ENCODE measurements at regions of chr2 and their contacts with region 1.

Region 1: DNA sequence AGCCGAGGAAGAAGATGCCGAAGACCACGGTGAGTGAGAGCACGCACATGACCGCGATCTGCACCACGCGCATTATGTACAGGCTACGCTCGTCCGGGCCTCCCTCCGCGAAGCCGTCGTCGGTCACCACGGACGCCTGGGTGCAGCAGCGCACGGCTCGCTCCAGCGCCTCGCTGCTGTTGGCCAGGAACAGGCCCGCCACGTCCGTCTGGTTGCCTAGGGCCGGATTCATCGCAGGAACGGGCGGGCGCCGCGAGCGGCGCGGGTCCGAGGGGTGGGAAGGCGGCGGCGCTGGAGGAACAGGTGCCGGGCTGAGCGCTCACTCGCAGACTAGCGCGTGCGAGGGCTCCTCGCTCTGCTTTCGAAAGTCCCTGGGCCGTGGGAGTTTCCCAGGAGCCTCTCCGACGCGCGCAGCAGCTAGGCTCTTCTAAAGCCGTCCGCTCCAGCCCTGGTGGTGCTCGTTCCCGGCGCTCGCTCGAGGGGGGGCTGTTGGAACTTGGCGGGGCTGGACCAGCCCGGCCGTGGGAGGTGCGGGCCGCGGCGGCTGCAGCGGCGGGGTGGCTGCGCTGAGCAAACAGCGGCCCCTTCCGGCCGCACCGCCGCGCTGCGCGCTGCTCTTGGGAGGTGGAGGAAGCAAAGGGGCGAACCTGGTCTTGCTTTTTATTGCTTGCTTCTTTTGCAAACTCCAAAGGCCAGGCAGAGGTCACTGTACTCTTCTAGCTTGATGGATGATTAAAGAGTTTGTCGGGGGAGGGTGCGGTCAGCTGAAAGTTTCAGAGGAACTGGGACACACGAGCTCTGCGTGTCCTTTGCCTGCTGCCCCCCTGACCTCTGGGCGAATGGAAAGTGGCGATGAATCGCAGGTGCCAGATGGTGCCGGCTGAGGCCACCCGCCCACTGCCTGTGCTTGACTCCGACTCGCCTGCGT is at the start of gene RPRM:
- DNase-seq: peak; percentile 89
- H3K4me3 Mint-ChIP-seq: peak within 1 kb of the TSS; percentile 56
- H3K27ac Mint-ChIP-seq: peak within 1 kb of the TSS; percentile 19
- H3K4me1 Mint-ChIP-seq: peaks cover 9% of the 10 kb centered on the region
- H3K27me3 Mint-ChIP-seq: peaks cover 52% of the 10 kb centered on the region
- total RNA-seq, gene RPRM: not detected in 2 replicates

Region 2: GRCh38 chr2:152594022-152594766 is 884.4 kb before region 1 on chr2:
- intact Hi-C with region 1: no loop called
- DNase-seq: peak; percentile 67
- H3K4me3 Mint-ChIP-seq: no peak overlapping the region
- H3K27ac Mint-ChIP-seq: peak overlapping the region; percentile 5
- H3K4me1 Mint-ChIP-seq: peaks cover 9% of the 10 kb centered on the region
- H3K27me3 Mint-ChIP-seq: no peaks in the 10 kb centered on the region

Region 3: GRCh38 chr2:152925547-152926327 is 552.9 kb before region 1 on chr2:
- intact Hi-C with region 1: loop called (anchors 5 kb)
- DNase-seq: peak; percentile 82
- H3K4me3 Mint-ChIP-seq: no peak overlapping the region
- H3K27ac Mint-ChIP-seq: no peak overlapping the region
- H3K4me1 Mint-ChIP-seq: no peaks in the 10 kb centered on the region
- H3K27me3 Mint-ChIP-seq: no peaks in the 10 kb centered on the region

Region 4: GRCh38 chr2:153163058-153163457 is 315.5 kb before region 1 on chr2:
- intact Hi-C with region 1: loop called (anchors 2 kb)
- DNase-seq: no peak
- H3K4me3 Mint-ChIP-seq: no peak overlapping the region
- H3K27ac Mint-ChIP-seq: no peak overlapping the region
- H3K4me1 Mint-ChIP-seq: no peaks in the 10 kb centered on the region
- H3K27me3 Mint-ChIP-seq: no peaks in the 10 kb centered on the region

Region 5: DNA sequence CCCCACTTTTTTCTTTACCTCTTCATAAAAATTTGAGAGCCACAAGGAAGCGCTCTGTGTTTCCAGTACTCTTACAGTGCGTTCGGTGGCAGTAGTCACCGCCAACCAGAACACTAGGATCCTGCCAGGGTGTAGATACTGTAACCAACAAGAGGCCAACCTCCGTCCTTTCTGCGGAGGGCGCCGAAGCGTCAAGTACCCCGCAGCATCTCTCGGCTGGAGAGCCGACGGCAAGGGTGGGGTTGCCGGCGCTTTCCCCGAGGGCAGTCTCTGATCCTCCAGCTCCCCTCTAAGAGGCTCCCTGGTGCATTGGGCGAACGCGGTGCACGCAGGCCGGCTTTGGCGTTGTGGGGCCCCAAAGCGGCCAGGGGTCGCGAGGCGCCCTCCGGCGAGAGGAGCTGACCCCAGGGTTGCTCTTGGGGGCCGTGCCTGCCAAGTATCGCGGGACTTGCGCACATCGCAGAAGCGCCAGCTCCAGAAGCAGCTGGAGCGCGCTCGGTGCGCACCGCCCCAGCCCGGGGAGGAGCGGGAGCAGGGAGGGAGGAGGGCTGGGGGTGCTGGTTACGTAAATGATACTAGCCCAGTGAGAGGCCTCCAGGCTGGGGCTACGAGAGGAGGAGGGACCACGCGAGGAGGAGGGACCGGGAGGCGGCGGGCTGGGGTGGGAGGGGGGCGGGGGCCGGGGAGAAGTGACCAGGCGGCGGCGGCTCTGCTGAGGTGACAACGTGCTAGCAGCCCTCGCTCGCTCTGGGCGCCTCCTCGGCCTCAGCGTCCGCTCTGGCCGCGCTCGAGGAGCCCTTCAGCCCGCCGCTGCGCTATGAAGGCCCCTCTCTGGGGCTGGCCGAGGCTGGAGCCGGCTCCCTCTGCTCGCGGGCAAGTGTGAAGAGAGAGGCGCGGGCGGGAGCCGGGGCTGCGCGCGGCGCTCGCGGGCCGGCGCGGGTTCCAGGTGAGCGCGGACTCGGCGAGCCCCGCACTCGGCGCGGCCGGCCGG is 392.9 kb after region 1 on chr2 and contains the start of gene GALNT13:
- intact Hi-C with region 1: loop called (anchors 10 kb)
- DNase-seq: no peak
- H3K4me3 Mint-ChIP-seq: no peak within 1 kb of the TSS
- H3K27ac Mint-ChIP-seq: no peak within 1 kb of the TSS
- H3K4me1 Mint-ChIP-seq: no peaks in the 10 kb centered on the region
- H3K27me3 Mint-ChIP-seq: peaks cover 23% of the 10 kb centered on the region
- total RNA-seq, gene GALNT13: 0.19 TPM in 1 of 2 replicates, not detected in the other